Panc1 (cell line): ENCODE measurements at regions of chr17 and their contacts with region 1.

Region 1: DNA sequence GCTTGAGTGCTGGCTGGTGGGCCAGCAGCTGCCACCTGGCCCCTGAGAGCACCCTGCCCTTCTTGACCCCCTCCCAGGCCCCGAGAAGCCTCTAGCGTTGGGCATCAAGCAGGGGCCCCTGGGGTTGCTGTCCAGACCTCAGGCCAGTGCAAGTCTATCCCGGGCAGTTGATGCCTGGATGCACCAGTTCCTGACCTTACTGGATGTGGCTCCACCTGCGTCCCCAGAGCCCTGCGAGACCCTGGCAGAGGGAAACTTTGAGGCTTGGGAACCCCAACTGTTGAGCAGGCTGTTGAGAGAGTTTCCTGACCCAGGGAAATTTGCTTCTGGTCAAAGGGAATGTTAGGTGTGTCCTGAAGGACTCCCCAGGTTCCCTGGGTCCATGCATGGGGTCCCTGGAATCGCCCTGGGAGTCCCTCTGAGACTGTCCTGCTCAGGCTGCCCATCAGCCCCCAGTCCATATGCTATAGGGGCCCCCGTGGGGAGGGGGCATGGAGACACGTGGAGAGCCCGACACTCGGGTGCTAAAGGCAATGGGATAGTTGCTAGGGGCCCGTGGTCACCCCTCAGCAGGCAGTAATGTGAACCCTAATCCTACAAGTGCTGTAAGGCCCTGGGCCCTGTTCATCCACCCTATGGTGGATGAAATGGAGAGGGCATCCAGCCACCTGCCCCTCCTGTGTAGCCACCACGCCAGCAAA is 46.4 kb downstream of the RAB11FIP4 start:
- DNase-seq: no peak
- ATAC-seq: peak; percentile 56
- H3K4me3 ChIP-seq: peak overlapping the region in 1 of 2 experiments; percentile 15; a peak in 2 of 4 replicates
- H3K27ac ChIP-seq: no peak overlapping the region
- H3K4me1 ChIP-seq: no peaks in the 10 kb centered on the region
- H3K27me3 ChIP-seq: no peaks in the 10 kb centered on the region
- CTCF ChIP-seq: no peak

Region 2: GRCh38 chr17:31456821-31457220 is 19.0 kb after region 1 on chr17:
- CTCF ChIA-PET with region 1: no interaction called
- POLR2A ChIA-PET with region 1: no interaction called
- in situ Hi-C with region 1: no loop called
- intact Hi-C with region 1: no loop called
- DNase-seq: no peak
- ATAC-seq: no peak
- H3K4me3 ChIP-seq: no peak overlapping the region
- H3K27ac ChIP-seq: no peak overlapping the region
- H3K4me1 ChIP-seq: no peaks in the 10 kb centered on the region
- H3K27me3 ChIP-seq: no peaks in the 10 kb centered on the region
- CTCF ChIP-seq: no peak

Region 3: DNA sequence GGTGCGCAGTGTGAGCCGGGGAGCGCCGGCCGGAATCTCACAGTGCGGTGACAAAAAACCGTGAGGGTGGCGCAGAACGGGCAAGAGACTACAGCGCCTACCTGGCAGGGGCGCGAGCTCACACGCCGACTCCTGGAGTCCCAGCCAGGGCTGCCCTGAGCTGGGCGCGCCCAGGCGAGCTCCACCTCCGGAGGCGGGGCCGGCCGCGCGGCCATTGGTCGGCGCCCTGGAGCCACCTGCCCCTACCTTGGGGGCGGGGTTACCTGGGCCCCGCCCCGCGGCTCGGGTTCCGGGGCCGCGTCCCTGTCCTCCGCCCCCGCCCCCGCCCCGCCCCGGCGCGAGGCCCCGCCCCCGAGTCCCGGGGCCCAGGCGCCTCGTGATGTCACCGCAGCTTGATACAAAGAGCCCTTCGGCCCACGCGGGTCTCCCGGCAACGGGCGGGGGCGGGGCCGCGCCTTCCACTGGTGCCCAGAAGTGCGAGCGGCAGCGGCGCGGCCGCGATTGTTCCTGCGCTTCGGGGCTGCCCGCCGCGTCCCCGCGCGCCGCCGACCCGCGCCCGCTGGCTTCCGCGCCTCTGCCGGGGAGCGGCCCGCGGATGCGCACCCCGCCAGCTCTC is 49.9 kb after region 1 on chr17:
- CTCF ChIA-PET with region 1: interaction called, 4 read pairs
- POLR2A ChIA-PET with region 1: interaction called, 10 read pairs
- in situ Hi-C with region 1: no loop called
- intact Hi-C with region 1: no loop called
- DNase-seq: no peak
- ATAC-seq: peak; percentile 93
- H3K4me3 ChIP-seq: peak overlapping the region; percentile 50 to 52
- H3K27ac ChIP-seq: no peak overlapping the region
- H3K4me1 ChIP-seq: no peaks in the 10 kb centered on the region; the same call in 1 of the 2 replicates
- H3K27me3 ChIP-seq: peaks cover 2% of the 10 kb centered on the region; the same call in 1 of the 2 replicates
- CTCF ChIP-seq: no peak

Region 4: GRCh38 chr17:31524926-31525800 is 87.3 kb after region 1 on chr17:
- CTCF ChIA-PET with region 1: interaction called, 3 read pairs
- POLR2A ChIA-PET with region 1: no interaction called
- in situ Hi-C with region 1: no loop called
- intact Hi-C with region 1: loop called (anchors 2 kb)
- DNase-seq: no peak
- ATAC-seq: peak; percentile 92
- H3K4me3 ChIP-seq: no peak overlapping the region
- H3K27ac ChIP-seq: no peak overlapping the region
- H3K4me1 ChIP-seq: no peaks in the 10 kb centered on the region
- H3K27me3 ChIP-seq: no peaks in the 10 kb centered on the region
- CTCF ChIP-seq: peak; percentile 94

Region 5: GRCh38 chr17:31842183-31843069 is 404.6 kb after region 1 on chr17:
- CTCF ChIA-PET with region 1: no interaction called
- POLR2A ChIA-PET with region 1: interaction called, 5 read pairs
- in situ Hi-C with region 1: no loop called
- intact Hi-C with region 1: loop called (anchors 2 kb)
- DNase-seq: peak; percentile 52
- ATAC-seq: peak; percentile 93
- H3K4me3 ChIP-seq: peak overlapping the region in 1 of 2 experiments; percentile 33; a peak in 2 of 4 replicates
- H3K27ac ChIP-seq: peak overlapping the region; percentile 82
- H3K4me1 ChIP-seq: peaks cover 19% of the 10 kb centered on the region
- H3K27me3 ChIP-seq: no peaks in the 10 kb centered on the region
- CTCF ChIP-seq: peak; percentile 97